HepG2 (cell line): ENCODE measurements at regions of chr2 and their contacts with region 1.

Region 1: GRCh38 chr2:144162652-144163051 is 357.3 kb downstream of the ZEB2 start:
- DNase-seq: peak; percentile 35
- ATAC-seq: peak; percentile 84
- H3K4me3 ChIP-seq: no peak overlapping the region
- H3K27ac ChIP-seq: no peak overlapping the region
- H3K4me1 ChIP-seq: peaks cover 10% of the 10 kb centered on the region
- H3K27me3 ChIP-seq: no peaks in the 10 kb centered on the region
- CTCF ChIP-seq: peak; percentile 73
- EP300 ChIP-seq: no peak
- POLR2A ChIP-seq: no peak
- RAD21 ChIP-seq: peak; percentile 68

Region 2: GRCh38 chr2:144115739-144116291 is 46.8 kb before region 1 on chr2:
- CTCF ChIA-PET with region 1: no interaction called
- POLR2A ChIA-PET with region 1: no interaction called
- in situ Hi-C with region 1: no loop called
- intact Hi-C with region 1: no loop called
- DNase-seq: no peak
- ATAC-seq: no peak
- H3K4me3 ChIP-seq: no peak overlapping the region
- H3K27ac ChIP-seq: no peak overlapping the region
- H3K4me1 ChIP-seq: no peaks in the 10 kb centered on the region
- H3K27me3 ChIP-seq: no peaks in the 10 kb centered on the region
- CTCF ChIP-seq: no peak
- EP300 ChIP-seq: no peak
- POLR2A ChIP-seq: no peak
- RAD21 ChIP-seq: no peak

Region 3: DNA sequence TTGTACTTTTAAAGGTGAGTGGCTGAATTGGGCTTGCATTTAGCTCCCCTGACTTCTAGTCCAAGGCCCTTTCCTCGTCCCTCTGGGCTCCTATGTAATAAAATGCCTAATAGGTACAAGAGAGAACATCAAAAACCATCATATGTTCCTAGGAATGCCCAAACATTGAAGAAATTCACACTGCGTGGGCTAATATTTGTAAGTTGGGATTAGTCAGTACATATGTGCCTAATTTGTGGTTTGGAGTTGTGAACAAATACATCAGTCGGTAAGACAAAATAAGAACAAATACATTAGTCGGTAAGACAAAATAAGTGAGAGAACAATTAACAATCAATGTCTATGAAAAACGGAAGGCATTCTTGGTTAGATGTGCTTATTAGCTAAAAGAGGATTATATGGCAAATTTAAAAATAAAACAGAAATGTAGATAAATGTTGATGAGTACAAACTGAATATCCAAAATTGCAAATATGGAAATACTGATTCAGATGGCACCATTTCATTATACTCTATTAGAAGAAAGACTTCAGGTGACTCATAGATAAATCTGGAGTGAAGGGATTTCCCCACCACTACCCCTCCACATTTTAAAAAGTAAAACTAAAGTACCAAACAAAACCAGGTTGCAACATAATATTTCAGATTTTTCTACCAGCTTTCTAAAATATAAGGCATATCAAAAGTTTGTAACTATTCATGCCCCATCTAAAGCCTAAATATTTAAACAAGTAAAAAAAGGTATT is 31.8 kb after region 1 on chr2:
- CTCF ChIA-PET with region 1: no interaction called
- POLR2A ChIA-PET with region 1: no interaction called
- in situ Hi-C with region 1: no loop called
- intact Hi-C with region 1: no loop called
- DNase-seq: no peak
- ATAC-seq: no peak
- H3K4me3 ChIP-seq: no peak overlapping the region
- H3K27ac ChIP-seq: no peak overlapping the region
- H3K4me1 ChIP-seq: peaks cover 10% of the 10 kb centered on the region
- H3K27me3 ChIP-seq: no peaks in the 10 kb centered on the region
- CTCF ChIP-seq: no peak
- EP300 ChIP-seq: no peak
- POLR2A ChIP-seq: no peak
- RAD21 ChIP-seq: no peak

Region 4: DNA sequence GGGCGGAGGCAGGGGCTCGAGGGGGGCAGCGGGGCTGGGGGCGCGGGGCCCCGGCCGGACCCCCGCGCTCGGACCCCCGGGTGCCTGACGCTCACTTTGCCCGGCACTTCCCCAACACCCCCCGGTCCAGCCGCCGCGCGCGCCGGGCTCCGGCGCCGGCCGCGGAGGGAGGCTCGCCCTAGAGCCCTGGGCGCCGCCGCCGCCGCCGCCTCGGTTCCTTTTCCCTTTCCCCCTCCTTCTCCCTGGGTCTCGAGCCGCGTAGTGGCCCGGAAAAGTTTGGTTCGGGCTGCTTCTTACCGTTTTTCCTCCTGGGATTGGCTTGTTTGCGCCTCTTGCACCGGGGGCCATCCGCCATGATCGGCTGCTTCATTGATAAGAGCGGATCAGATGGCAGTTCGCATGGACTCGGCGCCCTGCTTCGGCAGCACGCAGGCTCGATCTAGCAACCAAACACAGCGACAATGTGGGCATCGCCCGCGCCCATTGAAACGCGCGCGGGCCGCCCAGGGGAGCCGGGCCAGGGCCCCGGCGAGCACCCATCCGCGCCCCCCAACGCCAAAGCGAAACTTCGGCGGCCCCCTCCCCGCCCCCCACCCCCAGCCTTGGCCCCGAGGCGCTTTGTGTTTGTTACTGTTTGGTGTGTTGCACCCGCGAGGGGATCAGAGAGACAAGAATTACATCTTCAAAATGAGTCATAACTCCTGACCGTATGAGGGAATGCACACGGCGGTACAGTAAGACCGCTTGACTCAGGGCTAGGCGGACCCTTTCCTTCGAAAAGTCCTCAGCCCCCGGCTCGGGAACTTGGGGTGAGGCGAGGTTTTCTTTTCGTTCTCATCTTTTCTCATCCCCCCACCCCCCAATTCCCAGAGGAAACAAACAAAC is 354.6 kb after region 1 on chr2:
- CTCF ChIA-PET with region 1: no interaction called
- POLR2A ChIA-PET with region 1: no interaction called
- in situ Hi-C with region 1: no loop called
- intact Hi-C with region 1: loop called (anchors 2 kb)
- DNase-seq: no peak
- ATAC-seq: peak; percentile 73
- H3K4me3 ChIP-seq: peak overlapping the region; percentile 56 to 70 (median 57); a peak in 5 of 6 replicates
- H3K27ac ChIP-seq: no peak overlapping the region
- H3K4me1 ChIP-seq: 0 out of 2 replicates have a peak, but pooled peaks cover 5% of the 10 kb centered on the region
- H3K27me3 ChIP-seq: peaks cover 4 to 85% of the 10 kb centered on the region in 2 experiments; a peak in 4 of 5 replicates
- CTCF ChIP-seq: no peak
- EP300 ChIP-seq: no peak
- POLR2A ChIP-seq: no peak
- RAD21 ChIP-seq: no peak

Region 5: GRCh38 chr2:144890828-144891227 is 728.2 kb after region 1 on chr2:
- CTCF ChIA-PET with region 1: no interaction called
- POLR2A ChIA-PET with region 1: no interaction called
- in situ Hi-C with region 1: no loop called
- intact Hi-C with region 1: loop called (anchors 5 kb)
- DNase-seq: no peak
- ATAC-seq: peak; percentile 39; the same call in 1 of the 3 replicates
- H3K4me3 ChIP-seq: no peak overlapping the region
- H3K27ac ChIP-seq: no peak overlapping the region
- H3K4me1 ChIP-seq: no peaks in the 10 kb centered on the region
- H3K27me3 ChIP-seq: no peaks in the 10 kb centered on the region
- CTCF ChIP-seq: no peak
- EP300 ChIP-seq: no peak
- POLR2A ChIP-seq: no peak
- RAD21 ChIP-seq: no peak